HepG2 (cell line): ENCODE measurements at regions of chrX and their contacts with region 1.

Region 1: GRCh38 chrX:107025545-107025944 is 25.5 kb upstream of the MORC4 start:
- DNase-seq: peak; percentile 12
- ATAC-seq: no peak
- H3K4me3 ChIP-seq: no peak overlapping the region
- H3K27ac ChIP-seq: no peak overlapping the region
- H3K4me1 ChIP-seq: no peaks in the 10 kb centered on the region
- H3K27me3 ChIP-seq: no peaks in the 10 kb centered on the region
- CTCF ChIP-seq: peak; percentile 68
- EP300 ChIP-seq: no peak
- POLR2A ChIP-seq: no peak
- RAD21 ChIP-seq: no peak

Region 2: DNA sequence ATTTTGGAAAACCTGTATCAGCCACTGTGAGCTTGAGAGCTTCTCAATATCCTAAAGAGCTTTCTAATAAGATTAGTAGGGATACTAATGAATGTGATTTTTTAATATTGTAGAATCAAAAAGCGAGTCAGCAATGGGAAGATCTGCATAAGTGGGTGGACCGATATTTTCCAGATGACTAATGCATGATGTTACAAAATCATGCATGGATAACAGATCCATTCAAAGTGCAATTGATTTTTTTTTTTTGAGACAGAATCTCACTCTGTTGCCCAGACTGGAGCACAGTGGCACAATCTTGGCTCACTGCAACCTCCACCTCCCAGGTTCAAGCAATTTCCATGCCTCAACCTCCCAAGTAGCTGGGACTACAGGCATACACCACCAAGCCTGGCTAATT is 112.7 kb before region 1 on chrX:
- CTCF ChIA-PET with region 1: no interaction called
- POLR2A ChIA-PET with region 1: no interaction called
- in situ Hi-C with region 1: no loop called
- intact Hi-C with region 1: no loop called
- DNase-seq: no peak
- ATAC-seq: no peak
- H3K4me3 ChIP-seq: no peak overlapping the region
- H3K27ac ChIP-seq: no peak overlapping the region
- H3K4me1 ChIP-seq: no peaks in the 10 kb centered on the region
- H3K27me3 ChIP-seq: no peaks in the 10 kb centered on the region
- CTCF ChIP-seq: no peak
- EP300 ChIP-seq: no peak
- POLR2A ChIP-seq: no peak
- RAD21 ChIP-seq: no peak

Region 3: GRCh38 chrX:107646735-107647134 is 621.2 kb after region 1 on chrX:
- CTCF ChIA-PET with region 1: no interaction called
- POLR2A ChIA-PET with region 1: no interaction called
- in situ Hi-C with region 1: no loop called
- intact Hi-C with region 1: loop called (anchors 5 kb)
- DNase-seq: no peak
- ATAC-seq: no peak
- H3K4me3 ChIP-seq: no peak overlapping the region
- H3K27ac ChIP-seq: no peak overlapping the region
- H3K4me1 ChIP-seq: no peaks in the 10 kb centered on the region
- H3K27me3 ChIP-seq: no peaks in the 10 kb centered on the region
- CTCF ChIP-seq: no peak
- EP300 ChIP-seq: no peak
- POLR2A ChIP-seq: no peak
- RAD21 ChIP-seq: no peak